ENCODE measurements at regions of chr18 and their contacts with region 1.

Region 1: DNA sequence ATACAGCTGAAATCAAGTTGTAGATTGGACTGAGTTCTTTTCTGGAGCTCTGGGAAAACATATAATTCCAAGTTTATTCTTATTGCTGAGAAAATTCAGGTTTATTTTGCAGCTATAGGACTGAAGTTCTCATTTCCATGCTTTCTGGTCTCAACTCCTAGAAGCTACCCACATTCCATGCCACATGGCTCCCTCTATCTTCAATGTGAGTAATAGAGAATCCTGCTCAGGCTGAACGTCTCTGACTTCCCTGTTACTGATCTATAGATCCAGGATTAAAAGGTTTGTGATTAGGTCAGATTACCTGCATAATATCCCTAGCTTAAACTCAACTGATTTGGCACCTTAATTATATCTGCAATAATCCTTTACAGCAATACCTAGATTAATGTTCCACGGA is 453.8 kb upstream of the MC4R start:
- DNase-seq: no peak
- ATAC-seq: peak; percentile 93
- H3K4me3 Mint-ChIP-seq: no peak overlapping the region
- H3K27ac Mint-ChIP-seq: no peak overlapping the region
- H3K4me1 Mint-ChIP-seq: no peaks in the 10 kb centered on the region
- H3K27me3 Mint-ChIP-seq: no peaks in the 10 kb centered on the region
- CTCF ChIP-seq: no peak

Region 2: GRCh38 chr18:60809937-60810336 is 16.4 kb before region 1 on chr18:
- CTCF ChIA-PET with region 1: interaction called, 23 read pairs
- POLR2A ChIA-PET with region 1: no interaction called
- DNase-seq: no peak
- ATAC-seq: no peak
- H3K4me3 Mint-ChIP-seq: no peak overlapping the region
- H3K27ac Mint-ChIP-seq: no peak overlapping the region
- H3K4me1 Mint-ChIP-seq: peaks cover 20% of the 10 kb centered on the region
- H3K27me3 Mint-ChIP-seq: peaks cover 56% of the 10 kb centered on the region
- CTCF ChIP-seq: no peak

Region 3: GRCh38 chr18:60962625-60963024 is 136.3 kb after region 1 on chr18:
- CTCF ChIA-PET with region 1: no interaction called
- POLR2A ChIA-PET with region 1: no interaction called
- DNase-seq: no peak
- ATAC-seq: no peak
- H3K4me3 Mint-ChIP-seq: no peak overlapping the region
- H3K27ac Mint-ChIP-seq: no peak overlapping the region
- H3K4me1 Mint-ChIP-seq: no peaks in the 10 kb centered on the region
- H3K27me3 Mint-ChIP-seq: no peaks in the 10 kb centered on the region
- CTCF ChIP-seq: no peak

Measured in WTC11 (cell line).